ENCODE measurements at regions of chrX and their contacts with region 1.

Region 1: GRCh38 chrX:46376246-46376885 is 168.9 kb downstream of the ZNF674 start:
- DNase-seq: no peak

Region 2: GRCh38 chrX:45801554-45801953 is 574.8 kb before region 1 on chrX:
- intact Hi-C with region 1: loop called (anchors 10 kb)
- DNase-seq: no peak

Measured in cardiac septum (tissue), 1 donor.